HepG2 (cell line): ENCODE measurements at regions of chr7 and their contacts with region 1.

Region 1: DNA sequence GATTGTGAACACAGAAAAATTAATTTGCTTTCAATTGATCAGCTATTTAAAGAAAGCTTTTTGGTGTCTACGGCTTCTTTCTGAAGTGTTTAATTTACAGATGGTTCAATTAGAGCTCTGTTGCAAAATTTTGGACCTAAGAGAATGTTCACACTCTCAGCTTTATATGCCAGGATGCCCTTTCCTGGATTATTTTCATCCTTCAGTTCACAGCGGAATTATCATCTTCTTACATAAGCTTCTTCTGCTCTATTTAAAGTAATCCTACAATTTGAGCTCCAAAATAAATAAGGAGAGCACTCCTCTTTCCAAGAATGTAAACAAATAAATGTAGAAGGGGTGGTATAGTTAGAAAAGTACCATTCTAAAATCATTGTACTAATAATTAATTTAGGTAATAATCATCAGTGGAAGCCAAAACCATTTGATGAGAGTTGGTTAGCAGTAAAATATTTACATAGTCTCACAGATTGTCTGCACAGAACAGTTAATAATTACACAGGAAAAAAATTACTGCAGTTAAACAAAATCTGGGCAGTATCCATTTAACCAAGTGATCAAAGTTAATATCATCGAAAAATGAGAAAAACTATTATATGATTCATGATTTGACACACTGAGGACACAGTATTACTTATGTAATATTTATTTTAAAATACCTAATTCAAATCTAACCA is 298.0 kb upstream of the TMEM229A start:
- DNase-seq: no peak
- ATAC-seq: no peak
- H3K4me3 ChIP-seq: no peak overlapping the region
- H3K27ac ChIP-seq: no peak overlapping the region
- H3K4me1 ChIP-seq: no peaks in the 10 kb centered on the region
- H3K27me3 ChIP-seq: no peaks in the 10 kb centered on the region
- CTCF ChIP-seq: no peak
- EP300 ChIP-seq: no peak
- POLR2A ChIP-seq: no peak
- RAD21 ChIP-seq: no peak

Region 2: DNA sequence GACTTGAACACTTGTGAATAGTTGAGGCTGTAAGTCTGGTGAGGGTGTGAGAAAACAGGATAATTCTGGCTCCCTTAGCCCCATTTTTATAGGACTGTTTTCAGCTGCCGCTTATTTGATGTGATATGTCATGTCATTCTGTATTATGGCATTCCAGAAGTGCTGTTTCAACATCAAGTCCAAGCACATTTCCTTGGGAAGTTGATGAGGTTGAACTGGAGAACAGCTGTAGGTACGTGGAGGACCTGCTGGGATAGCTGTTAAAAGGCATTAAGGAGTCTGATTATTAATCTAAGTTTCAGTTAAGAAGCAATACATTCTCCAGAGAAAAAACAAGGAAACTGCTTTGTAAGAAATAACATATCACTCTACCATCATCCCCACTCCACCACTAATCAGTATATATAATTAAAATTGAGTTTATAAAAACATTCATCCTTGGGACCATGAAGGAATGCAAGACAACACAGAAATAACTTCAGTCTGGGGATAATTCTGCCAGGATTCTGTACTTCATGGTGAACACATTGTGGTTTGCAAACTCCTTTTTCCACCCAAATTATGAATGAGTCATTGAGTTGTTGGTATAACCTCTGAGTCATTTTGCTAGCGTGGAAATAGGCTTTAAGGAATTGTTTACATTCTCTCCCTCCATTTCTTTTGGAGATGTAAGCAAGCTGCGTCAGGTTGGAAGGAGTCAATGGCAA is 258.1 kb before region 1 on chr7:
- CTCF ChIA-PET with region 1: no interaction called
- POLR2A ChIA-PET with region 1: no interaction called
- in situ Hi-C with region 1: no loop called
- intact Hi-C with region 1: no loop called
- DNase-seq: peak; percentile 6
- ATAC-seq: no peak
- H3K4me3 ChIP-seq: no peak overlapping the region
- H3K27ac ChIP-seq: no peak overlapping the region
- H3K4me1 ChIP-seq: no peaks in the 10 kb centered on the region
- H3K27me3 ChIP-seq: no peaks in the 10 kb centered on the region
- CTCF ChIP-seq: no peak
- EP300 ChIP-seq: no peak
- POLR2A ChIP-seq: no peak
- RAD21 ChIP-seq: no peak

Region 3: GRCh38 chr7:124399941-124400340 is 69.1 kb after region 1 on chr7:
- CTCF ChIA-PET with region 1: no interaction called
- POLR2A ChIA-PET with region 1: no interaction called
- in situ Hi-C with region 1: no loop called
- intact Hi-C with region 1: loop called (anchors 10 kb)
- DNase-seq: no peak
- ATAC-seq: no peak
- H3K4me3 ChIP-seq: no peak overlapping the region
- H3K27ac ChIP-seq: no peak overlapping the region
- H3K4me1 ChIP-seq: no peaks in the 10 kb centered on the region
- H3K27me3 ChIP-seq: no peaks in the 10 kb centered on the region
- CTCF ChIP-seq: no peak
- EP300 ChIP-seq: no peak
- POLR2A ChIP-seq: no peak
- RAD21 ChIP-seq: no peak